ENCODE measurements at regions of chr9 and their contacts with region 1.

Region 1: GRCh38 chr9:115013998-115014397 is 83.6 kb upstream of the TNFSF8 start:
- DNase-seq: peak; percentile 45 to 69
- H3K4me3 ChIP-seq: no peak overlapping the region
- H3K27ac ChIP-seq: no peak overlapping the region
- H3K4me1 ChIP-seq: no peaks in the 10 kb centered on the region
- H3K27me3 ChIP-seq: peaks cover 23% of the 10 kb centered on the region; the same call in 1 of the 2 replicates
- CTCF ChIP-seq: peak; percentile 94

Region 2: GRCh38 chr9:114108016-114108833 is 905.8 kb before region 1 on chr9:
- CTCF ChIA-PET with region 1: no interaction called
- POLR2A ChIA-PET with region 1: no interaction called
- intact Hi-C with region 1: loop called (anchors 5 kb)
- DNase-seq: peak in 1 of 2 experiments; percentile 74
- H3K4me3 ChIP-seq: no peak overlapping the region
- H3K27ac ChIP-seq: no peak overlapping the region
- H3K4me1 ChIP-seq: no peaks in the 10 kb centered on the region
- H3K27me3 ChIP-seq: peaks cover 53% of the 10 kb centered on the region
- CTCF ChIP-seq: peak; percentile 81

Region 3: GRCh38 chr9:114413861-114414301 is 600.1 kb before region 1 on chr9:
- CTCF ChIA-PET with region 1: interaction called, 10 read pairs
- POLR2A ChIA-PET with region 1: no interaction called
- intact Hi-C with region 1: no loop called
- DNase-seq: no peak
- H3K4me3 ChIP-seq: no peak overlapping the region
- H3K27ac ChIP-seq: no peak overlapping the region
- H3K4me1 ChIP-seq: no peaks in the 10 kb centered on the region
- H3K27me3 ChIP-seq: no peaks in the 10 kb centered on the region
- CTCF ChIP-seq: no peak

Region 4: GRCh38 chr9:114681594-114682332 is 332.2 kb before region 1 on chr9 and contains the start of gene TEX48:
- CTCF ChIA-PET with region 1: interaction called, 6 read pairs
- POLR2A ChIA-PET with region 1: no interaction called
- intact Hi-C with region 1: loop called (anchors 1 kb)
- DNase-seq: peak; percentile 48 to 63
- H3K4me3 ChIP-seq: no peak within 1 kb of the TSS
- H3K27ac ChIP-seq: no peak within 1 kb of the TSS
- H3K4me1 ChIP-seq: peaks cover 23% of the 10 kb centered on the region
- H3K27me3 ChIP-seq: no peaks in the 10 kb centered on the region
- CTCF ChIP-seq: peak; percentile 82
- total RNA-seq, gene TEX48: not detected in 2 replicates

Region 5: GRCh38 chr9:114989600-114990410 is 24.2 kb before region 1 on chr9:
- CTCF ChIA-PET with region 1: no interaction called
- POLR2A ChIA-PET with region 1: interaction called, 11 read pairs
- intact Hi-C with region 1: no loop called
- DNase-seq: no peak
- H3K4me3 ChIP-seq: no peak overlapping the region
- H3K27ac ChIP-seq: no peak overlapping the region
- H3K4me1 ChIP-seq: peaks cover 15% of the 10 kb centered on the region
- H3K27me3 ChIP-seq: peaks cover 22% of the 10 kb centered on the region; the same call in 1 of the 2 replicates
- CTCF ChIP-seq: no peak

Region 6: DNA sequence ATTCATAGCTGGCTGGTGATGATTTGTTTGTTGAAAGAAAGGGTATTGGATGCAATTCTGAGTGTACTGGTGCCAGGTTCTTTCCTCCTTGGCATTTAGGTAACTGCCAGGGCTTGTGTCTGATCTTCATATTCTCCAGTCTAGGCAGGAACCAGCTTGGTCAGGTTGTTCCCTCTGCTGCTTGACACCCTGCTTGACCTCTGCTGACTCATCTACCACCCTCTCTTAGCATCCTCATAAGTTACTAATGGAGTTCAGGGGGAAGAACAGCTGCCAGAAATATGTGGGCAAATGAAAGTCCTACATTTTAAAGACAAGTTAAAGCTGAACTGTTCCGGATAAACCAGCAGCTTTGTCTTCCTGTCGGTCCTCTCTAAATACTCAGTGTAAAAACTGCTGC is 220.1 kb after region 1 on chr9:
- CTCF ChIA-PET with region 1: interaction called, 10 read pairs
- POLR2A ChIA-PET with region 1: no interaction called
- intact Hi-C with region 1: loop called (anchors 5 kb)
- DNase-seq: peak; percentile 69 to 85
- H3K4me3 ChIP-seq: no peak overlapping the region
- H3K27ac ChIP-seq: 0 out of 2 replicates have a peak overlapping the region, but pooled peaks have one; percentile 24
- H3K4me1 ChIP-seq: peaks cover 18% of the 10 kb centered on the region
- H3K27me3 ChIP-seq: no peaks in the 10 kb centered on the region
- CTCF ChIP-seq: no peak

Measured in PC-9 (cell line).